ENCODE measurements at regions of chr5 and their contacts with region 1.

Region 1: DNA sequence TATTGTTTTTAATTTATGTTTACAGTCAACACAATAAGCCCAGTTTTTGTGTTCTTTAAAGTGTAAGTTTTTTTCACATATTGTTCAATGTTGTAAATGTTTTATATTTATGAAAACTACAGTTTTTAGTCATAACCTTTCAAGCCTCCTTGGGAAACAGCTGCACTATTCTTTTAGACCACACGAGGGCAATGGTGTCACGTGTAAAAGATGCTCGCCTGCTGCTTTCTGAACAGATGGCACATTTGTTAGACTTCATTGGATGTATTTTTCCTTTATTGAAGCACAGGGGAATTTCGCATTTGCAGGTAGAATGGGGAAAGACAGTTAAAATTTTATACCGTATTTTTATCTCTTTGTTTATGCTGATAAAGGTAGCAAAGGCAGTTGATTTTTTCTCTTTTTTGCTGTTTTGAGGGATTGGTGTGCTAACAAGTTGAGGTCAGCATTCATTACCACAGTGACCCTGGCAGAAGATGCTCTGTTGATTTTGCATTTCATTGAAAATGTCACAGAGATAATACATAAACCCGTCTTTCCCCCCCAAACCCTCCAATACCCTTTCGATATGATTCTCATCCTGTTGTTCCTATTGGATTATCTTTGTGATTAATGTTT is 59.0 kb downstream of the MAT2B start:
- DNase-seq: peak; percentile 80
- H3K4me3 ChIP-seq: no peak overlapping the region
- H3K27ac ChIP-seq: peak overlapping the region; percentile 36
- H3K4me1 ChIP-seq: peaks cover 52% of the 10 kb centered on the region
- H3K27me3 ChIP-seq: no peaks in the 10 kb centered on the region
- CTCF ChIP-seq: peak; percentile 60 to 72
- POLR2A ChIP-seq: no peak

Region 2: GRCh38 chr5:163695830-163696578 is 131.6 kb after region 1 on chr5:
- CTCF ChIA-PET with region 1: interaction called, 58 read pairs
- POLR2A ChIA-PET with region 1: no interaction called
- dilution Hi-C with region 1: no loop called
- intact Hi-C with region 1: loop called (anchors 1 kb)
- DNase-seq: peak; percentile 87
- H3K4me3 ChIP-seq: no peak overlapping the region
- H3K27ac ChIP-seq: peak overlapping the region; percentile 24
- H3K4me1 ChIP-seq: peaks cover 7% of the 10 kb centered on the region
- H3K27me3 ChIP-seq: no peaks in the 10 kb centered on the region
- CTCF ChIP-seq: peak; percentile 76 to 78
- POLR2A ChIP-seq: no peak

Region 3: GRCh38 chr5:164013077-164013670 is 448.7 kb after region 1 on chr5:
- CTCF ChIA-PET with region 1: interaction called, 54 read pairs
- POLR2A ChIA-PET with region 1: no interaction called
- dilution Hi-C with region 1: no loop called
- intact Hi-C with region 1: loop called (anchors 1 kb)
- DNase-seq: peak; percentile 88
- H3K4me3 ChIP-seq: no peak overlapping the region
- H3K27ac ChIP-seq: peak overlapping the region; percentile 47
- H3K4me1 ChIP-seq: peaks cover 11% of the 10 kb centered on the region
- H3K27me3 ChIP-seq: no peaks in the 10 kb centered on the region
- CTCF ChIP-seq: peak; percentile 45 to 59
- POLR2A ChIP-seq: no peak

Region 4: GRCh38 chr5:164422400-164422799 is 858.0 kb after region 1 on chr5:
- CTCF ChIA-PET with region 1: interaction called, 4 read pairs
- POLR2A ChIA-PET with region 1: no interaction called
- dilution Hi-C with region 1: no loop called
- intact Hi-C with region 1: loop called (anchors 2 kb)
- DNase-seq: peak; percentile 43
- H3K4me3 ChIP-seq: no peak overlapping the region
- H3K27ac ChIP-seq: no peak overlapping the region
- H3K4me1 ChIP-seq: no peaks in the 10 kb centered on the region
- H3K27me3 ChIP-seq: no peaks in the 10 kb centered on the region
- CTCF ChIP-seq: peak in 1 of 2 donors; percentile 36
- POLR2A ChIP-seq: no peak

Region 5: DNA sequence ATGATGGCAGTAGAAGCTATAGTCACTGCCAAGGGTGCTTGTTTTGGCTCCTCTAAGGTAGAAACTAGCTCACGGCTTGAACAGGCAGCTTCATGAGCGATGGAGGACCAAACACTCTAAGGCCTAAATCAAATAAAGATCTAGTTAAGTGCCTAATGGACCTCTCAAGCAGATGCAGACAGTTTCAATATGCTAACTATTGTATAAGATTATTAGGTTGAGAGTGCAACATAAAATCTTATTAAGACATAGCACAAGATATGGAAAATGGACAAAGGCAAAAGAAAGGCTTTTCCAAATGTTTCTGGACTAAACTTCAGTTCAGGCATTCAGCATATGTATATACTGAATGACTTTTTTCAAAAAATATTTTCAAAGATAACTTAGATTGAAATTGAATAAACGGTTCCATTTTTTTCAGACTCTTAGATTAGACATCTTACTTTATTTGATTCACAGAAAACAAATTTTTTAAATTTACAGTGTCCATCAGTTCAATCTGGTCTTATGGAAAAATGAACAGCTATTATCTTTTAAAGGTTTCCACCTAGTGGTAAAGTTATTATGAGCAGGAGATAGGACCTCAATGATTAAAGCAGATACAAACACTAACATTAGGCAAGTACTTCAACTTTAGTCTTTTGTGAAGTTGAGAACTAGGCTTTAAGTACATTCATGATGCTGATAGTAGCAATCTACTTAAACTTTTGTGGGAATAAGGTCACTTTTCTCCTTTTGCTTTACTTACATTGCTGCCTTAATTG is 1108.7 kb after region 1 on chr5:
- CTCF ChIA-PET with region 1: interaction called, 3 read pairs
- POLR2A ChIA-PET with region 1: no interaction called
- dilution Hi-C with region 1: no loop called
- intact Hi-C with region 1: loop called (anchors 10 kb)
- DNase-seq: no peak
- H3K4me3 ChIP-seq: no peak overlapping the region
- H3K27ac ChIP-seq: no peak overlapping the region
- H3K4me1 ChIP-seq: no peaks in the 10 kb centered on the region
- H3K27me3 ChIP-seq: no peaks in the 10 kb centered on the region
- CTCF ChIP-seq: no peak
- POLR2A ChIP-seq: no peak